ENCODE measurements at regions of chr4 and their contacts with region 1.

Region 1: DNA sequence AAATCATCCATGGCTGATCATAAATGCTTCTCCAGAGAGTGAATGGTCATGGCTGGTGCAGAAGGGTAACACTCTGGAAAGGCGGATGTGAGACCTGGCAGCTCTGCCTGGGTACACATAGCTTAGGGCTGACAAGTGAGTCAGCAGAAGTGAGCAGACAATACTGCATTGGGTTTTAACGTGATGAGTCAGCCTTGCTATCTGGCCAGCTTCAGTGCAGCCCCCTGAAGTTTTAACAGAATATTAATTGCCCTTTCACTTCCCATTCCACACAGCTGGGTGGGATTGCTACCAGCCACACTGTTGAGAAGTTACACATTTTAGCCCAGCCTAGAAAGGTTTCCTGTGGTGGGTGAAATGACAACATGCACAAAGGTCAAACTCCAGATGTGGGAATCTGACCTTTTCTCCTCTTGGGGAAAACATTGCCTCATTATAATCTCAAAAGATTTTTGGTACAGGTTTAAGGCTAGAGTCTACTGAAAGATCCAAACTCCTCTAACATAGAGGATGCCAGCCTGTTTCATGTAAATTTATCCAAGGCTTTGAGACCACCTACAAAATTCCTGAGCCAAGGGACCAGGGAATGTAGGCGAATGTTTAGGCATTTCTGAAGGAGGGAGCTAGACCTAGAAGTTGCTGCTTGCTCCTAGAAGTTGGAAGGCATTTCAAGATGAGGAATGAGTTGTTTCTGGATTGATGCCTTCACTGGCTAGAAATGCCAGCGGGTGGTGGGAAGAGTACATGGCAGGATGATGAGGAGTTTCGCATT is 230.3 kb upstream of the PGRMC2 start:
- DNase-seq: peak; percentile 97
- H3K4me3 ChIP-seq: no peak overlapping the region
- H3K27ac ChIP-seq: peak overlapping the region; percentile 92
- H3K4me1 ChIP-seq: peaks cover 58% of the 10 kb centered on the region
- H3K27me3 ChIP-seq: no peaks in the 10 kb centered on the region
- CTCF ChIP-seq: no peak
- POLR2A ChIP-seq: no peak

Region 2: GRCh38 chr4:128123036-128123435 is 394.9 kb before region 1 on chr4:
- CTCF ChIA-PET with region 1: no interaction called
- POLR2A ChIA-PET with region 1: no interaction called
- dilution Hi-C with region 1: no loop called
- intact Hi-C with region 1: no loop called
- DNase-seq: no peak
- H3K4me3 ChIP-seq: no peak overlapping the region
- H3K27ac ChIP-seq: no peak overlapping the region
- H3K4me1 ChIP-seq: no peaks in the 10 kb centered on the region
- H3K27me3 ChIP-seq: no peaks in the 10 kb centered on the region
- CTCF ChIP-seq: no peak
- POLR2A ChIP-seq: no peak

Region 3: DNA sequence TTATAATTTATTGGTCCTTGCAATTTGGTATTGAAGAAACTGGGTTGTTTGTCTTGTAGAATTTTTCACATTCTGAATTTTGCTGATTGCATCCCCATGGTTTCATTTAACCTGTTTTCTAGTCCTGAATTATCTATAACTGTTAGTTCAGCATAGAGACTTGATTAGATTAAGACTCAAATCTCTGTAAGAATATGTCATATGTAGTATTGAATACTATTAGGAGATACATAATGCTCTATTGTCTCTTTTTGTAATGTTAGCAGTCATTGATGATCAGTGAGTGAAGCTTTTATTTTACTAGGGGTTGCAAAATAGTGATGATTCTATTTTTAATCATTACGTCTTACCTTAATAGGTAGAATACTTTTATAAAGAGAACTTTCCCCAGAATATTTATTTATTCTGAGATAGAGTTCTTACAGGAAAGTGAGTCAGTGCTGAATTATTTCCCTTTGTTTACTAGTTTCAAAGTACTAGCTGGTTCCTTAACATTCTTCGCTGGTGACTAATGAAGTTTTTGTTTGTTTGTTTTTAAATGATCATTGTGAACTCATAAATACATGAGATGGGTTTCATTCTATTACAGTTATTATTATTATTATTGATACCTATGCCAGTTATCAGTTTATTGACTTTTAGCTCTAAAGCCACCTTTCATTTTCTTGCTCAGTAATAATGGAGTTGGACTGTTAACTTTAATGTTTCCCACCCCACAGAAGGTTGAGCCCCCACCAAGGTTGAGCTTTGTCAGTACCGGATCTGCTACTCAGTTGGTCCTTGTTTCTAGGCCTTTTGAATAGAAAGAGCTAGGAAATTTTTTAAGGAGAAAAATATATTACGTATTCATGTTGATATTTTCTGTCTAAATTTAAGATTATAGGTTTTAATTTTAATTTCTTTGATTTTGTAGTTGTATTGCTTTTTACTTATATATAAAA is 354.5 kb before region 1 on chr4:
- CTCF ChIA-PET with region 1: no interaction called
- POLR2A ChIA-PET with region 1: no interaction called
- dilution Hi-C with region 1: no loop called
- intact Hi-C with region 1: loop called (anchors 1 kb)
- DNase-seq: peak; percentile 87
- H3K4me3 ChIP-seq: peak overlapping the region in 1 of 3 experiments; percentile 48
- H3K27ac ChIP-seq: peak overlapping the region; percentile 99
- H3K4me1 ChIP-seq: peaks cover 60% of the 10 kb centered on the region
- H3K27me3 ChIP-seq: no peaks in the 10 kb centered on the region
- CTCF ChIP-seq: no peak
- POLR2A ChIP-seq: no peak

Region 4: GRCh38 chr4:128379860-128380259 is 138.1 kb before region 1 on chr4:
- CTCF ChIA-PET with region 1: interaction called, 4 read pairs
- POLR2A ChIA-PET with region 1: no interaction called
- dilution Hi-C with region 1: no loop called
- intact Hi-C with region 1: loop called (anchors 10 kb)
- DNase-seq: peak; percentile 32
- H3K4me3 ChIP-seq: no peak overlapping the region
- H3K27ac ChIP-seq: no peak overlapping the region
- H3K4me1 ChIP-seq: no peaks in the 10 kb centered on the region
- H3K27me3 ChIP-seq: no peaks in the 10 kb centered on the region
- CTCF ChIP-seq: peak; percentile 55 to 71
- POLR2A ChIP-seq: no peak

Region 5: DNA sequence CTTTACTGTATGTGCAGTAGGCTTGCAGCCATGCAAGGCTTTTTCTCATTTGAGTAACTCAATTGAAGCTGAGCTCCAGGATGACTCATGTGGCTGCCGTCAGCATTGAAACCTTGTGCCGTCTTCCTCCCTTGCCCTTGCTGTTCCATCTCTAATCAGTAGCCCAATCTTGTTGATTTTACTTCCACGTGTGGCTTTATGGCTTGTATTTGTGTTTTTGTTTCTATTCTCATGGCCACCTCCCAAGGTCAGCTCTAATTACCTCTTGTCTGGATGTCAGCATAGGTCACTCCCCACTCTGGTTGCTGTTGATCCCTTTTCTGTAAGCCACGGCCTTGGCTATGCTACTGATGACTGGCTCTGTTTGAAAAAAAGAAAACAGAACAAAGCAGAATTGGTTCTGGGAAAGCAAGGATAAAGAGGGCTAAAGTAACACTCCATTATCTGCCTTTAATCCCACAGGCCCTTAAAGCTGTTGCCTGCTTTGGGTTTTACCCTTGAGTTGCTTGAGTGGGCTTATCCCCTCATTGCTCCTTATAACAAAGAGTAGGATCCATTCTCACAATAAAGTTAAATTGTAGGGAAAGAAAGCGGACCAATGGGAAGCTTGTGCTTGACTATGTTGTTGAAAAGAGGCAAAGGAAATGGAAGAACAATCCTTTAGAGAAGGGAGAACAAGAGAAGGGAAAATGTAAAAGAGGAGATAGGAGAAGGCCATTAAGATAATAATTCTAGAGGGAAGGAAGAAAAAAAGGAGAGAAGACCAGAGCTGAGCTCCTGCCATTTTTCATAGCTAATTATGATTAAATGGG is 56.4 kb before region 1 on chr4:
- CTCF ChIA-PET with region 1: interaction called, 3 read pairs
- POLR2A ChIA-PET with region 1: interaction called, 3 read pairs
- dilution Hi-C with region 1: no loop called
- intact Hi-C with region 1: loop called (anchors 1 kb)
- DNase-seq: peak; percentile 95
- H3K4me3 ChIP-seq: no peak overlapping the region
- H3K27ac ChIP-seq: peak overlapping the region; percentile 76
- H3K4me1 ChIP-seq: peaks cover 12% of the 10 kb centered on the region
- H3K27me3 ChIP-seq: no peaks in the 10 kb centered on the region
- CTCF ChIP-seq: no peak
- POLR2A ChIP-seq: no peak

Region 6: GRCh38 chr4:128502818-128503527 is 15.0 kb before region 1 on chr4:
- CTCF ChIA-PET with region 1: interaction called, 11 read pairs
- POLR2A ChIA-PET with region 1: interaction called, 6 read pairs
- dilution Hi-C with region 1: no loop called
- intact Hi-C with region 1: loop called (anchors 1 kb)
- DNase-seq: peak; percentile 91
- H3K4me3 ChIP-seq: no peak overlapping the region
- H3K27ac ChIP-seq: peak overlapping the region; percentile 62
- H3K4me1 ChIP-seq: peaks cover 22% of the 10 kb centered on the region
- H3K27me3 ChIP-seq: no peaks in the 10 kb centered on the region
- CTCF ChIP-seq: no peak
- POLR2A ChIP-seq: peak; percentile 69

Region 7: DNA sequence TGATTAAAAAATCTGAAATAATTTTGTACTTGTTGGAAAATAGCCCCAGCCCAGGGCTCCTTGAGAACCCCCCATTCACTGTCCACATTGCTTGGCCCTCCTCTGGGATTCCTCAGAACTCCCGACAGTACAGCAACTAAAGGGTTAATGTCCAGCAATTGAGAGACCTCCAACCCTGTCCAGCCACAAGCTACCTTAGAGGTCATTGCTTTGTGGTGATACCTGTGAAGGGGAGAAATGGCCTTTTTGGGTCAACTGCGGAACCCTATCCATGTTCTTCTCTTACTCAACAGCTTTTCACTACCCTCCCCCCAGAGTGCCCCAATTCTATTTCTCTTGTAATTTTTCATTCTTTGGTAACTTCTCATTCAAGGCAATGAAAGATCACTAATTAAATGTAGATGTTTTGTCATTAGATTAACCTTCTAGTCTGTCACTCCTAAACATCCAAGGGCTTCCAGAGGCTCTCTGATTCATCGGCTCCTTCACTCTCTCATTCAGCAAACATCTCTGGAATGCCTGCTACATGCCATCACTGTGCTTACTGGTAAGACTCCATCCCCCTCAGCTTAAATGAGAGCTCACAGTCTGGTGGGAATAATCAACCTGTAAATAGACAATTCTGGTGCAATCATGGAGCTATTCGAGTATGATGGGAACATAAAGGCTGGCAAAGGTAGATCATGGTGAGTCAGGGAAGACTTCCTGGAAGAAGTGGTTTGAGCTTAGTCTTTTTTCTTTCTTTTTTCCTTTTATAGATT is 11.0 kb after region 1 on chr4:
- CTCF ChIA-PET with region 1: interaction called, 5 read pairs
- POLR2A ChIA-PET with region 1: interaction called, 11 read pairs
- dilution Hi-C with region 1: no loop called
- intact Hi-C with region 1: loop called (anchors 1 kb)
- DNase-seq: peak; percentile 88
- H3K4me3 ChIP-seq: no peak overlapping the region
- H3K27ac ChIP-seq: peak overlapping the region; percentile 95
- H3K4me1 ChIP-seq: peaks cover 29% of the 10 kb centered on the region
- H3K27me3 ChIP-seq: no peaks in the 10 kb centered on the region
- CTCF ChIP-seq: no peak
- POLR2A ChIP-seq: no peak

Region 8: DNA sequence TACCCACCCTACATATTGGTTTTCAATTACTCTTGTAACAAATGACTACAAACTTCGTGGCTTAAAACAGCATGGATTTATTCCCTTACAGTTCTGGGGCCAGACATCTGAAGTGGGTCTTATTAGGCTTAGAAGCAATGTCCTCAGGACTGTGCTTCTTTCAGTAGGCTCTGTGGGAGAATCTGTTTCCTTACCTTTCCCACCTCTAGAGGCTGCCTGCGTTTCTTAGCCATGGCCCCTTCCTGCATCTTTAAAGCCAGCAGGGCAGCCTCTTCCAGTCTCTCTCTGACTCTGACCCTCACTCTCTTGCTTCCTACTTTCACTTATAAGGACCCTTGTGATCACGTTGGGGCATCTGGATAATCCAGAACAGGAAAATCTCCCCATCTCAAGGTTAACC is 22.2 kb after region 1 on chr4:
- CTCF ChIA-PET with region 1: no interaction called
- POLR2A ChIA-PET with region 1: no interaction called
- dilution Hi-C with region 1: no loop called
- intact Hi-C with region 1: no loop called
- DNase-seq: no peak
- H3K4me3 ChIP-seq: no peak overlapping the region
- H3K27ac ChIP-seq: no peak overlapping the region
- H3K4me1 ChIP-seq: peaks cover 7% of the 10 kb centered on the region
- H3K27me3 ChIP-seq: no peaks in the 10 kb centered on the region
- CTCF ChIP-seq: no peak
- POLR2A ChIP-seq: no peak

Region 9: GRCh38 chr4:128553686-128554515 is 36.0 kb after region 1 on chr4:
- CTCF ChIA-PET with region 1: interaction called, 16 read pairs
- POLR2A ChIA-PET with region 1: interaction called, 3 read pairs
- dilution Hi-C with region 1: no loop called
- intact Hi-C with region 1: loop called (anchors 1 kb)
- DNase-seq: peak; percentile 68
- H3K4me3 ChIP-seq: peak overlapping the region in 2 of 3 experiments; percentile 21 to 60
- H3K27ac ChIP-seq: peak overlapping the region; percentile 86
- H3K4me1 ChIP-seq: peaks cover 22% of the 10 kb centered on the region
- H3K27me3 ChIP-seq: no peaks in the 10 kb centered on the region
- CTCF ChIP-seq: no peak
- POLR2A ChIP-seq: no peak